AG04450 (cell line): ENCODE measurements at regions of chr11 and their contacts with region 1.

Region 1: GRCh38 chr11:101748572-101749344 is 165.0 kb upstream of the TRPC6 start:
- DNase-seq: no peak
- H3K4me3 ChIP-seq: no peak overlapping the region
- H3K27ac ChIP-seq: no peak overlapping the region
- H3K27me3 ChIP-seq: no peaks in the 10 kb centered on the region
- CTCF ChIP-seq: no peak

Region 2: DNA sequence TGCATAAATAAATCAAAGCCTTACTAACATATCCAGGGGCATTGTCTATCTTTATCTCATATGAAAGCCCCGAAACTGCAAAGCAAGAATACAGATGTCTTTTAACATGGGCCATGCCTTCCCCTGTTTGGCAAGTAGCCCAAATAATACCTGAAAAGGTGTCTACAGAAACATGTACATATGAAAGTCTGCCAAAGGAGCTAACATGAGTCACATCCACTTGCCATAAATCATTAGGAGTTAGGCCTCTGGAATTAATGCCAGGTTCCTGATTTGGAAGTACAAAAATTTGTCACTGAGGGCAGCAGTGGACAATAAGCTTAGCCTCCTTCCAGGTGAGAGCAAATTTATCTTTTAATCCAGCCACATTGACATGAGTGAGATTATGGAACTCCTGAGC is 533.7 kb before region 1 on chr11:
- CTCF ChIA-PET with region 1: no interaction called
- POLR2A ChIA-PET with region 1: no interaction called
- DNase-seq: no peak
- H3K4me3 ChIP-seq: no peak overlapping the region
- H3K27ac ChIP-seq: no peak overlapping the region
- H3K27me3 ChIP-seq: no peaks in the 10 kb centered on the region
- CTCF ChIP-seq: no peak

Region 3: DNA sequence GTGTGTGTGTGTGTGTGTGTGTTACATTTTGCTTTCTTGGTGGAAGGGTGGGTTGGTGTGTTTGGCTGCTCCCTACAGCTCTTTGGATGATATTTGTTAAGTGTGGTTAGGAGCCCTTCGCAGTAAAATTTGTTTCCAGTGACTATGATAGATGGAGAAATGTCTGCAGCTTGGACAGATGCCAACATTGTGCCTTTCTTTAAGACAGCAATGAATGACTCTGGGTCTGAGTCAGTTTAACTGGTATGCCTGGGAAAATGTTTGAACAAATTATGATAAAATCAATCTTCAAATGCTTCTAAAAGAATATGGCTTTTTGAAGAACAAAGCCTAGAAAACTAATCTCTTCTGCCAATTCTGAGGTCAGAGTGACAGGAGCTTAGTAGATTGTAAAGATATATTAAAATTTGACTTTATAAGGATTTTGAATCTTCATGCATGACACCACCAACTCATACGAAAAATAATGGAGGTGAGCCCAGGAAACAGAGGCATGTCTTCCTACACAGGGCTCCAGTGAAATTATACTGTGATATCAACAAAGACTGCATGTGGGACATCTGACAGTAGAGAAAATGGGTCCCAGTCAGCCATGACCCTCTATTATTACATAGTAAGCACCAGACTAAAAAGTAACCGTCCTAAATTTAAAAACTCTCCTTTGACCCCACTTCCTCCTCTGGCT is 62.1 kb before region 1 on chr11:
- CTCF ChIA-PET with region 1: interaction called, 10 read pairs
- POLR2A ChIA-PET with region 1: no interaction called
- DNase-seq: no peak
- H3K4me3 ChIP-seq: no peak overlapping the region
- H3K27ac ChIP-seq: no peak overlapping the region
- H3K27me3 ChIP-seq: no peaks in the 10 kb centered on the region
- CTCF ChIP-seq: no peak